Right cardiac atrium (tissue), 5 donors: ENCODE measurements at regions of chr1 and their contacts with region 1.

Region 1: DNA sequence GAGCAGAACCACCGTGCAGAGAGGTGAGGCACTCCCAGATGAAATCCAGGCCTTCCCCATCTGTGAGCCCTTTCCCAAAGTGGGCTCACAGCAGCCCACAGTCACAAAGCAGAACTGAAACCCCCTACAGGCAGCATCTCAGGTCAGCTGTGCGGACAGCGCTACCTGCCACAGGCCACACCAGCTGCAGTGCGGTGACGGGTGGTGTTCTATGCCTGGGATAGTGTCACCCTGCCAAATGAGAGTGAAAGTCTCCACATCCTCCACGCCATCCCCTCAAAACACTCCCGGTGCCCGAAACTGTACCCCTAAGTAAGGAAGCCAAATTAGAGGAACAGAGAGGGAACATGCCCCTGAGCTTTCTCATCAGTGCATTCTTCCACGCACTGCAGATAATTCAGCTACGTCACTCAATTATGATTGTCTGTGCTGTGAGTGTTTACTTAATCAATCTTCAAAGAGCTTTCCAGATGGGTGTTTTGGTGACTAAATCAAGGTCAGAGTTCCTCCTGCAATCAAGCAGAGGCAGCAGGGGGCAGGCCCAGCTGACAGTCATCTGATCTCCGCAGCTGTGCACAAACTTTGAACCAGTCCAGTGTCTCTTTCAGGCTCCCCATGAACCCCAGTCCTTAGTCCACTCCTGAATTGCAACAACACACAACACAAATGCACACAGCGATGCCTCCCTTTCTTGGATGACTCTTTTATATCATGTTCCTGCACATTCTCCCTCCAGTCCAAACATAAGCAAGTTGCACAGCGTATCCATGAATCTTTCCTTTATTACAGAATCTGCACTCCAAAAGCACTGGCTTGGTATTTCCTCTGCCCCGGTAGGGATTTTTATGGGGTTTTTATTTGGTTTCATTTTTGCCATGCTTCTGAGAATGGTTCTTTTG is 150.0 kb downstream of the TOMM20 start:
- DNase-seq: peak in 1 of 3 donors; percentile 77
- ATAC-seq: peak in 1 of 2 donors; percentile 24
- H3K4me3 ChIP-seq: no peak overlapping the region
- H3K27ac ChIP-seq: peak overlapping the region; percentile 98
- H3K4me1 ChIP-seq: peaks cover 39% of the 10 kb centered on the region
- H3K27me3 ChIP-seq: no peaks in the 10 kb centered on the region

Region 2: GRCh38 chr1:234573711-234574299 is 404.8 kb before region 1 on chr1:
- intact Hi-C with region 1: no loop called
- DNase-seq: no peak
- ATAC-seq: peak; percentile 62 to 65
- H3K4me3 ChIP-seq: no peak overlapping the region
- H3K27ac ChIP-seq: no peak overlapping the region
- H3K4me1 ChIP-seq: peaks cover 2% of the 10 kb centered on the region
- H3K27me3 ChIP-seq: no peaks in the 10 kb centered on the region

Region 3: GRCh38 chr1:234599617-234600417 is 378.8 kb before region 1 on chr1:
- intact Hi-C with region 1: loop called in 1 of 4 experiments (anchors 5 kb)
- DNase-seq: peak; percentile 91 to 96 (median 96)
- ATAC-seq: peak; percentile 93 to 94
- H3K4me3 ChIP-seq: peak overlapping the region; percentile 44
- H3K27ac ChIP-seq: peak overlapping the region; percentile 97
- H3K4me1 ChIP-seq: no peaks in the 10 kb centered on the region
- H3K27me3 ChIP-seq: no peaks in the 10 kb centered on the region

Region 4: GRCh38 chr1:234709473-234710228 is 269.0 kb before region 1 on chr1:
- intact Hi-C with region 1: no loop called
- DNase-seq: peak; percentile 39 to 74 (median 69)
- ATAC-seq: peak; percentile 73 to 75
- H3K4me3 ChIP-seq: no peak overlapping the region
- H3K27ac ChIP-seq: peak overlapping the region; percentile 74
- H3K4me1 ChIP-seq: no peaks in the 10 kb centered on the region
- H3K27me3 ChIP-seq: no peaks in the 10 kb centered on the region

Region 5: DNA sequence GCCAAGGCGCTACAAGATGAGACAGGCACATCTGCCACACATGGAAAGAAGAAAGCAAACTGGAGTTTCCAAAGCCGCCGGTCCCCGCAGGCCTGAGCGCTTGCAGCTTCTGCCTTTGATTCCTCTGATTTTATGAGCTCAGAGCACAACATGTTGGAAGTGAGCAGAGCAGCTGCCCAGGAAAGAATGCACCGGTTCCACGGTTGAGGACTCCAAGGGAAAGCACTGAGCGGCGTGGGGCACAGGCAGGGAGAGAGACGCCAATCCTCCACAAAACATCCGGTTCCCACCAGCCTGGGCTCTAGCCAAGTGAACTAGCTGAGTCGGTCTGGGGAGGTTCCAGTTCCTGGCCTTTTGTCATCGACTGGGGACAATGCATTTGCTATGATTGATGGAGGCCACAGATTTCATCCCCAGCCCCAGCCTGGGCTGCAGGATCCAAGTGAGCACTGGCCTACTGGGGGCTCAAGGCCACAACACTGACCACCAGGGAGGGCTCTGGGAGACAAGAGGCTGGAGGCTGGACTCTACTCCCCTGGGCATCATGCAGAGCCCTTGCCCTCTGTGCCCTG is 115.6 kb before region 1 on chr1:
- intact Hi-C with region 1: loop called in 1 of 4 experiments (anchors 10 kb)
- DNase-seq: peak; percentile 87 to 94 (median 92)
- ATAC-seq: peak; percentile 77 to 78
- H3K4me3 ChIP-seq: no peak overlapping the region
- H3K27ac ChIP-seq: peak overlapping the region; percentile 81
- H3K4me1 ChIP-seq: peaks cover 19% of the 10 kb centered on the region
- H3K27me3 ChIP-seq: no peaks in the 10 kb centered on the region